ENCODE measurements at regions of chr11 and their contacts with region 1.

Region 1: GRCh38 chr11:76152086-76152681 is 54.1 kb downstream of the WNT11 start:
- DNase-seq: peak; percentile 70 to 95 (median 88)

Region 2: DNA sequence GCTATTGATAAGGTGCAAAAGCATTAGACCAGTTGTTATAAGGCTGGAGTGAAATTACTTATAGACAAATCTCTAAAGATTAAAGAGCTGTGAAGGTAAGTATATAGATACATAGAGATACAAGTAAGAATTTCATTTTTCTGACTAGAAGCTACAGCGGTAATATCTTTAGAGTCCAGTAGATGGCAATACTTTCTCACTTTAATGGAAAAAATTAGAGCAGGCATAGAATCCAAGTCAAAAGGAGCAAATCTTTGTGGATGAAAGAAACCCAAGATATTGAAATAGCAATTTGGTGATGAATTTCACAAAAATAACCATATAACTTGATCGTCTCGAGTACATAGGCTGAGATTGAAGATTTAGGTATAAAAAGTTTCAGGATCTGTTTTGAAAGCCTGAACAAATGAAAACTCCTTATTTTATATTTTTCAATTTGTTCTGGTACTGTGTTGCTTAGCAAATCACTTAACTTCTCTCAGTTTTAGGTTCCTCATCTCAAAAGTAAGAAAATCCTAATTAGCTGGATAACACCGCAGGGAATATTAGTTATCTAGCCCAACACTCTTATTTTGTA is 255.3 kb before region 1 on chr11:
- intact Hi-C with region 1: loop called (anchors 5 kb)
- DNase-seq: no peak

Measured in head of caudate nucleus (tissue), 42 donors.